Calu3 (cell line): ENCODE measurements at regions of chr7 and their contacts with region 1.

Region 1: GRCh38 chr7:18352339-18353255 is 143.0 kb upstream of the HDAC9 start:
- DNase-seq: peak; percentile 81
- H3K4me3 Mint-ChIP-seq: peak overlapping the region; percentile 67
- H3K27ac Mint-ChIP-seq: peak overlapping the region; percentile 91
- H3K4me1 Mint-ChIP-seq: peaks cover 60% of the 10 kb centered on the region
- H3K27me3 Mint-ChIP-seq: no peaks in the 10 kb centered on the region
- CTCF ChIP-seq: peak; percentile 71

Region 2: GRCh38 chr7:18495412-18496340 is 143.1 kb after region 1 on chr7 and contains the start of gene HDAC9:
- CTCF ChIA-PET with region 1: interaction called, 12 read pairs
- intact Hi-C with region 1: no loop called
- DNase-seq: no peak
- H3K4me3 Mint-ChIP-seq: peak within 1 kb of the TSS; percentile 75
- H3K27ac Mint-ChIP-seq: peak within 1 kb of the TSS; percentile 90
- H3K4me1 Mint-ChIP-seq: peaks cover 50% of the 10 kb centered on the region
- H3K27me3 Mint-ChIP-seq: no peaks in the 10 kb centered on the region
- CTCF ChIP-seq: no peak
- total RNA-seq, gene HDAC9: 152 and 159 TPM in 2 replicates

Region 3: DNA sequence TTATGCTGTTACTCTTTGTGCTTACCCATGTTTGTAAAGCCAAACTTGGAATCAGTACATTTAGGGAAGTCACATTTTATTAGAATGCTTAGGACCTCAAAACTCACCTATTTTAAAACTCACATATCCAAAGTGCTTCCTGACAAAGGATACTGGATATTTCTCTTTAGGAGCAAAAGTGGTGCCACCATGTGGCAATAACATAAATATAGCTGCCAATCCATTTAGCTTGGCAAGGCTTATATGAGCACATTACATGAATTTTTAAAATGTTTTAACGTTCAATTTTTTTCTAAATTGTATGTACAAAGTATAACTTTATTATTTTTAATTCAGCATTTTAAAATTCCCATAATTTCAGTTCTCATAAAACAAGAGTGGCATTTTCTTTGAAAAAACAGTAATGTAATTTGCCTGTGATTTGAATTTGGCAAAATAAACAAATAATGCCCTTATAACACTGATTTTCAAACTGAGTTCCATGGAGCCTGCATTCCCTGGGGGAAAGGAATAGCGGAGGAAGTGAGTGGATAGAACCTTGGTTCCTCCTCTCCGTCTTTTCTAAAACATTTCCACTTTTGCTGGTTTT is 218.4 kb after region 1 on chr7:
- CTCF ChIA-PET with region 1: interaction called, 101 read pairs
- intact Hi-C with region 1: loop called (anchors 1 kb)
- DNase-seq: peak; percentile 41
- H3K4me3 Mint-ChIP-seq: no peak overlapping the region
- H3K27ac Mint-ChIP-seq: peak overlapping the region; percentile 54
- H3K4me1 Mint-ChIP-seq: peaks cover 27% of the 10 kb centered on the region
- H3K27me3 Mint-ChIP-seq: no peaks in the 10 kb centered on the region
- CTCF ChIP-seq: peak; percentile 55

Region 4: DNA sequence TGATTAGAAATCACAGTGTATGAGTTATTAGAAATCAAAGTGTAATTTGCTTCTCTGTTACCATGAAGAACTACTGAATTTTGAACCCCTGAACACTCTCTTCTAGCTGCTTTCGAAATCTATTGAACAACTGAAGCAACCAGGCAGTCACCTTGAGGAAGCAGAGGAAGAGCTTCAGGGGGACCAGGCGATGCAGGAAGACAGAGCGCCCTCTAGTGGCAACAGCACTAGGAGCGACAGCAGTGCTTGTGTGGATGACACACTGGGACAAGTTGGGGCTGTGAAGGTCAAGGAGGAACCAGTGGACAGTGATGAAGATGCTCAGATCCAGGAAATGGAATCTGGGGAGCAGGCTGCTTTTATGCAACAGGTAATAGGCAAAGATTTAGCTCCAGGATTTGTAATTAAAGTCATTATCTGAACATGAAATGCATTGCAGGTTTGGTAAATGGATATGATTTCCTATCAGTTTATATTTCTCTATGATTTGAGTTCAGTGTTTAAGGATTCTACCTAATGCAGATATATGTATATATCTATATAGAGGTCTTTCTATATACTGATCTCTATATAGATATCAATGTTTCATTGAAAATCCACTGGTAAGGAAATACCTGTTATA is 313.6 kb after region 1 on chr7:
- CTCF ChIA-PET with region 1: interaction called, 23 read pairs
- intact Hi-C with region 1: loop called (anchors 1 kb)
- DNase-seq: peak; percentile 85
- H3K4me3 Mint-ChIP-seq: no peak overlapping the region
- H3K27ac Mint-ChIP-seq: peak overlapping the region; percentile 13
- H3K4me1 Mint-ChIP-seq: peaks cover 10% of the 10 kb centered on the region
- H3K27me3 Mint-ChIP-seq: no peaks in the 10 kb centered on the region
- CTCF ChIP-seq: peak; percentile 98

Region 5: DNA sequence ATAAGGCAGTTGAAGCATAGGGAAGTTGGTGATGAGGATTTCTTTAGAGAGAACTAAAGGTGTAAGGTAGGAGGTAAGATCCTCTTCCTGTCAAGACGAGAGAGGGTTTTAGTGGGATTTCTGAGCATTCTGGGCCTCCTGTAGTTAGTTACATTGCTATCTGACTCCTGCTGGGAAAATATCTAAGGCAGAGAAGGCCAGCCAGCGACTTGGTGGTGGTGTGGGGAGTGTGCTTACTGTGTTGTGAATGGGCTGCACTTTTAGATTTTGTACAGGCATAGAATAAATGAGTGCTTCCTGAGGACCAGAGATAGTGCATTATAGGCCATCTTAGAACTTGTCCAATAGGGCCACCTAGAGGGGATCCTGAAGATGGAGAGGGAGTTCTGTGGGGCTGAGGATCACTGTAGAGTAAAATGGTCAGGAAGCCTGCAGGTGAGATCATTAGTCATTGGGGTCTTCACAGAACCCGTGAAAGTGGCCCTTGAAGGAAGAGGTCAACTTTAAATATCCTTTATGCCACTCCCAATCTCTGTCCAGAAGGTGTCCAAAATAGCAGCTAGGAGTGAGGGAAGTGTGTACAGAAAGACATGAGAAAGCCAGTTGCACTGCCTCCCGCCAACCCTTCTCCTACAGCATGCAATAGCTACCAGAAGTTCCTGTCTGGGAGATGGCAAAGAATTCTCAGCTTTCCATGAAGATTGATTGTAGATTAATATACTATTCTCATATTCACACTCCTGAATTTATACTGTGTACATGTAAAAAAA is 1089.6 kb after region 1 on chr7:
- CTCF ChIA-PET with region 1: no interaction called
- intact Hi-C with region 1: loop called (anchors 5 kb)
- DNase-seq: peak; percentile 42
- H3K4me3 Mint-ChIP-seq: no peak overlapping the region
- H3K27ac Mint-ChIP-seq: no peak overlapping the region
- H3K4me1 Mint-ChIP-seq: no peaks in the 10 kb centered on the region
- H3K27me3 Mint-ChIP-seq: no peaks in the 10 kb centered on the region
- CTCF ChIP-seq: peak; percentile 51